Activated naive CD4-positive, alpha-beta T cell treated with anti-CD3 and anti-CD28 coated beads for 36 hours (primary cell): ENCODE measurements at regions of chr18 and their contacts with region 1.

Region 1: GRCh38 chr18:63286926-63287325 is 32.6 kb downstream of the BCL2 start:
- DNase-seq: no peak
- H3K4me3 Mint-ChIP-seq: no peak overlapping the region
- H3K27ac Mint-ChIP-seq: no peak overlapping the region
- H3K4me1 Mint-ChIP-seq: peaks cover 17% of the 10 kb centered on the region
- H3K27me3 Mint-ChIP-seq: no peaks in the 10 kb centered on the region

Region 2: GRCh38 chr18:63267975-63268721 is 18.8 kb before region 1 on chr18:
- CTCF ChIA-PET with region 1: no interaction called
- intact Hi-C with region 1: loop called (anchors 2 kb)
- DNase-seq: no peak
- H3K4me3 Mint-ChIP-seq: no peak overlapping the region
- H3K27ac Mint-ChIP-seq: peak overlapping the region; percentile 19
- H3K4me1 Mint-ChIP-seq: peaks cover 69% of the 10 kb centered on the region
- H3K27me3 Mint-ChIP-seq: no peaks in the 10 kb centered on the region